IMR-90 (cell line): ENCODE measurements at regions of chr7 and their contacts with region 1.

Region 1: GRCh38 chr7:134827889-134828288 is 48.5 kb downstream of the CALD1 start:
- DNase-seq: peak; percentile 84
- ATAC-seq: peak; percentile 60
- H3K4me3 ChIP-seq: no peak overlapping the region
- H3K27ac ChIP-seq: peak overlapping the region; percentile 39; the same call in 1 of the 2 replicates
- H3K4me1 ChIP-seq: peaks cover 30% of the 10 kb centered on the region
- H3K27me3 ChIP-seq: no peaks in the 10 kb centered on the region
- CTCF ChIP-seq: no peak
- POLR2A ChIP-seq: no peak; the same call in 1 of the 2 replicates
- RAD21 ChIP-seq: no peak

Region 2: DNA sequence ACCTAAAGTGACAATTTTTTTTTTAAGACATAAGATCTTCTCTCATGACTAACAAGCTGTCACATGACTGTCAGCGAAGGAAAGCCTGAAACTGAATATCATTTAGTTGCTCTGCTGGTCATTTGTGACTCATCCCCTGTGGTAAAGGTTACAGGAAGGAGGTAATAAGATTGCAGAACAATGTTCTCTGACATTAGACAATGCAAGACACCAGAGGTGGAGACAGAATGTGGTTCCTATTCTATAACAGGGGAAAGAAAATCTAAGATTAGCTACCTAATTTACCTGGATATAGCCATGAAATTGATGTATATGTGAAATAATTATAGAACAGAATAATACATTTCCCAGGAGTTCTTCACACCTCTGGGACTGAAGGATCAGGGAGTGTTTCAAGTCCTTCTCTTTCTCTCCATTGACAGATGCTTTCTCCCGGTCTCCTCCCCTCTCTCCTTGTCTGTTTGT is 653.1 kb before region 1 on chr7:
- CTCF ChIA-PET with region 1: no interaction called
- POLR2A ChIA-PET with region 1: no interaction called
- dilution Hi-C with region 1: no loop called
- in situ Hi-C with region 1: no loop called
- intact Hi-C with region 1: no loop called
- DNase-seq: peak; percentile 91
- ATAC-seq: peak; percentile 92
- H3K4me3 ChIP-seq: no peak overlapping the region
- H3K27ac ChIP-seq: no peak overlapping the region
- H3K4me1 ChIP-seq: no peaks in the 10 kb centered on the region
- H3K27me3 ChIP-seq: no peaks in the 10 kb centered on the region
- CTCF ChIP-seq: no peak
- POLR2A ChIP-seq: no peak
- RAD21 ChIP-seq: no peak

Region 3: DNA sequence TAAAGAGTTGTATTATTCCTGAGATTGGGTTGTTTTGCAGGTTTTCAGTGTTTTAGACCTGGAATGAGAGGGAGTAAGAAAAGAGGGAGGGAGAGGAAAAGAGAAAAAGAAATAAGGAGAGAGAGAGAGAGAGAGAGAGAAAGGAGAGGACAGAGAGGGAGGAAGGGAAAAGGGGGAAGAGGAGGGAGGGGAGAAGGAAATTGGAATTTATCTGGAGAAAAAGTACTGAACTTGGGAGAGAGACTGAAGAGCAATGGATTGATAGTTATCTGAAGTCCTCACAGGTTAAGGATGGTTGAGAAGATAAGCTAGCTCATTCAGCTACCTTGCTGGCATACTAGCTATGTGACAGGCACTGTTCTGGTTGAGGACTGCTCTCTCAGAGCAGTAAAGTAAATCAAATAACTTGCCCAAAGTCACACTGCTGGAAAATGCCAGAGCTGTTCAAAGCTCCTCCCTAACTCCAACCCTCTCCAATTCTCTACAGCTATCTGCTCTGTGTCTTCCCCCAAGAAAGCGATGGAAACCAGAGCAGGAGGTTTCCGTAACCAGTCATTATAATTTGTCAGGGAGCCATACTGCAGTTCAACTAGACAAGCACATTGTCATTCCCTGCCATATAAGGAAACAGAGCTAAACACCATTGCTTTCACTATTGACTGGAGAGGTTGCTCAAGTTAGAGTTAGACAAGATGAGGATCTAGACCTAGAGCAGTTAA is 37.8 kb before region 1 on chr7:
- CTCF ChIA-PET with region 1: interaction called, 3 read pairs
- POLR2A ChIA-PET with region 1: no interaction called
- dilution Hi-C with region 1: no loop called
- in situ Hi-C with region 1: no loop called
- intact Hi-C with region 1: loop called (anchors 2 kb)
- DNase-seq: peak; percentile 76
- ATAC-seq: peak; percentile 61
- H3K4me3 ChIP-seq: no peak overlapping the region
- H3K27ac ChIP-seq: peak overlapping the region; percentile 72; the same call in 1 of the 2 replicates
- H3K4me1 ChIP-seq: peaks cover 18% of the 10 kb centered on the region
- H3K27me3 ChIP-seq: no peaks in the 10 kb centered on the region
- CTCF ChIP-seq: no peak
- POLR2A ChIP-seq: no peak; the same call in 1 of the 2 replicates
- RAD21 ChIP-seq: no peak

Region 4: GRCh38 chr7:134891262-134891695 is 63.4 kb after region 1 on chr7:
- CTCF ChIA-PET with region 1: no interaction called
- POLR2A ChIA-PET with region 1: no interaction called
- dilution Hi-C with region 1: no loop called
- in situ Hi-C with region 1: no loop called
- intact Hi-C with region 1: loop called (anchors 5 kb)
- DNase-seq: peak; percentile 92
- ATAC-seq: peak; percentile 72
- H3K4me3 ChIP-seq: peak overlapping the region; percentile 46
- H3K27ac ChIP-seq: peak overlapping the region; percentile 93
- H3K4me1 ChIP-seq: peaks cover 32% of the 10 kb centered on the region
- H3K27me3 ChIP-seq: no peaks in the 10 kb centered on the region
- CTCF ChIP-seq: no peak
- POLR2A ChIP-seq: no peak
- RAD21 ChIP-seq: no peak